Dendritic cell treated with granulocyte-macrophage colony-stimulating factor and Interleukin-4, amounts not matched to agents 40 ng/mL and 50 ng/mL, for 4 days (primary cell): ENCODE measurements at regions of chr14 and their contacts with region 1.

Region 1: DNA sequence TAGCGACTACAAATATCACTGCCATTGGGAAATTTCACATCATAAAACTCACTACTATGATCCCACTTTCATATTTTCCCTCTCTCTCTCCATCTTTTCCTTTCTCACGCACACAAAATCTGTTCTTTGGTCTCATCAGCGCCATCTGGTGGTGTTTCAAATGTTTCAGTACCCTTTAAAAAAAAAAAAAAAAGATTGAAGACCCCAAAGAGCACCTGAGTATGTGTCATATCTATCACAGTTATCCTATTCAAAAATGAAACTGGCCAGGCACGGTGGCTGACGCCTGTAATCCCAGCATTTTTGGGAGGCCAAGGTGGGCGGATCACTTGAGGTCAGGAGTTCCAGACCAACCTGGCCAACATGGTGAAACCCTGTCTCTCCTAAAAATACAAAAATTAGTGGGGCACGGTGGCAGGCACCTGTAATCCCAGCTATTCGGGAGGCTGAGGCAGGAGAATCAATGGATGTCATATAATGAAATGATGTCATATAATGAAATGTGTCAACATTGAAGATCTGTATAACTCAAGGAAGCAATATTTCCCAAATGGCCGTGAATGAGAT is 72.4 kb downstream of the TTC9 start:
- H3K4me3 Mint-ChIP-seq: no peak overlapping the region
- H3K27ac Mint-ChIP-seq: peak overlapping the region; percentile 58
- H3K4me1 Mint-ChIP-seq: peaks cover 25% of the 10 kb centered on the region
- H3K27me3 Mint-ChIP-seq: peaks cover 4% of the 10 kb centered on the region

Region 2: DNA sequence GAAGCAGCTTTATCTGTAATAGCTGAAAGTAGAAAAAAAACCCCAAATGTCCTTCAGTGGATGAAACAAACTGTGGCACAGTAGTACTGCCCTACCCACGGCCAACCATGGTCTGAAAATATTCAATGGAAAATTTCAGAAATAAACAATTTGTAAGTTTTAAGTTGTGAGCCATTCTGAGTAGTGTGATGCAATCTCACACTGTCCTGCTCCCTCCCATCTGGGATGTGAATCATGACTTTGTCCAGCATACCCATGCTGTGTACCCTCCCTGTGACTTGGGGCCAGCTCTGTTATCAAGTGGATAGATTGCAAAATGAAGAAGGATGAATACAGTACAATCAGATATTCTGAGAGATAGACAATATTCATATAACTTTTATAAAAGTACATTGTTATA is 728.7 kb before region 1 on chr14:
- intact Hi-C with region 1: no loop called
- H3K4me3 Mint-ChIP-seq: no peak overlapping the region
- H3K27ac Mint-ChIP-seq: no peak overlapping the region
- H3K4me1 Mint-ChIP-seq: no peaks in the 10 kb centered on the region
- H3K27me3 Mint-ChIP-seq: peaks cover 20% of the 10 kb centered on the region

Region 3: DNA sequence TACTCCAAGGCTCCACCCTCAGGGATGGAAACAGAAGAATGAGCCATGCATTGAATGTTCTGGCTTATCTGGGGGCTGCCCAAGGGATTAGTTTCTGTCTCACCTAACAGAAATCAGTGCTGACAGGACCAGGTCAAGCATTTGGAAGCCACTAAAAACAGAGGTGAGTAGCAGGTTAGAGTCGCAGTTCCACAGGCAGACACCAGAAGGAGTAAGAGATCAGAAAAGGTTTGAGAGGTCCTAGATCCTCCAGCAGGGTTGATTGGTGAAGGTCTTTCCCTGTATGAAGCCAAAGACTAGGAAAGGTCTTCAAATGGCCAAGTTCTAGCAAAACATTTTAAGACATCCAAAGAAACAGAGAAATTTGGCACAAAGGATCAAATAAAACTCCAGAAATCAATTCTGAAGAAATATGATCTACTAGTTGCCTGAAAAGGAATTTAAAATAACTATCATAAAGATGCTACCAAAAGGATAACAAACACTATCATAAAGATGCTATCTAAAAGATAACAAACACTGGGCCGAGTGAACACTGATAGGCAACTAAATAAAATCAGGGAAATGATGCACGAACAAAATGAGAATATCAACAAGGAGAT is 91.9 kb before region 1 on chr14:
- intact Hi-C with region 1: loop called (anchors 1 kb)
- H3K4me3 Mint-ChIP-seq: no peak overlapping the region
- H3K27ac Mint-ChIP-seq: no peak overlapping the region
- H3K4me1 Mint-ChIP-seq: no peaks in the 10 kb centered on the region
- H3K27me3 Mint-ChIP-seq: peaks cover 7% of the 10 kb centered on the region

Region 4: GRCh38 chr14:70640938-70641547 is 73.1 kb before region 1 on chr14:
- intact Hi-C with region 1: loop called (anchors 5 kb)
- H3K4me3 Mint-ChIP-seq: peak overlapping the region; percentile 80
- H3K27ac Mint-ChIP-seq: peak overlapping the region; percentile 73
- H3K4me1 Mint-ChIP-seq: peaks cover 46% of the 10 kb centered on the region
- H3K27me3 Mint-ChIP-seq: peaks cover 42% of the 10 kb centered on the region

Region 5: DNA sequence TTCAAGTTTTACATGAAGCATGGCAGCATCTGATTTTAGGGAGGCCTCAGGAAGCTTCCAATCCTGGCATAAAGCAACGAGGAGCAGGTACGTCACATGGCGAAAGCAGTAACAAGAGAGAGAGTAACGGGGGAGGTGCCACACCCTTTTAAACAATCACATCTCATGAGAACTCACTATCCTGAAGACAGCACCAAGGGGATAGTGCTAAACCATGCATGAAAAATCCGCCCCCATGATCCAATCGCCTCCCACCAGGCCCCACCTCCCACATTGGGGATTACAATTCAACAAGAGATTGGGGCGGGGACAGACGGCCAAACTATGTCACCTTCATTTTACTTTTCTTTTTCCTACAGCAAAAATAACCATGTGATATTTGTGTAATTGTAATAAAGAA is 102.4 kb after region 1 on chr14:
- intact Hi-C with region 1: loop called (anchors 5 kb)
- H3K4me3 Mint-ChIP-seq: no peak overlapping the region
- H3K27ac Mint-ChIP-seq: no peak overlapping the region
- H3K4me1 Mint-ChIP-seq: peaks cover 10% of the 10 kb centered on the region
- H3K27me3 Mint-ChIP-seq: peaks cover 27% of the 10 kb centered on the region